Naive thymus-derived CD4-positive, alpha-beta T cell (primary cell): ENCODE measurements at regions of chr6 and their contacts with region 1.

Region 1: DNA sequence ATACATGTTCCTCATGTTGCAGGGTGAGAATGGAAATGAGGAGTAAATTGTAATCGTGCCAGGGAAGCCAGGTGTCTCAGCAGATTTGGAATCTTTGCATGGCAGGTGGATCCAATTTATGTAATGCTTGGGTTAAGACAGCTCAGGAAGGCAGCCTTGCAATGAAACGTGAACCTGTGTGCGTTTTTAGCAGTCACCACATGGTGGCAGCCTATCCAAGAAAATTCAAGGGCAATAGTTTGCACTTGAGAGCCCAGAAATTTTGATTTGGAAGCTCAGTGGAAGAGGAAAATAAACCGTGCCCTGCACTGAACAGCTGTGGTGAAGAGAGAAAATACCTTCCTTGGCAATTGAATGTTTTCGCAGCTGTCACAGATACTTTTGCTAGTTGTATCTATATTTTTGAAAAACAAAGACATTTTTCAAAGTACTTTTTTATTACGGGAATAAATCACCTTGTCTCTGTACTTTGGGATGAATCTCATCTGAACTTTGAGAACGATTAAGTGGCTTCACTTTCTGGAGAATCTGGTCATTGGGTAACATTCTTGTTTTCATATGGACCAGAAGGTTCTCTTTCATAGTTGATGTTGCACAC is 26.5 kb downstream of the MTHFD1L start:
- DNase-seq: peak; percentile 8 to 58 (median 44)
- ATAC-seq: peak; percentile 76
- H3K4me3 ChIP-seq: no peak overlapping the region
- H3K4me3 Mint-ChIP-seq: no peak overlapping the region
- H3K27ac ChIP-seq: no peak overlapping the region
- H3K27ac Mint-ChIP-seq: peak overlapping the region in 1 of 9 donors; percentile 34
- H3K4me1 ChIP-seq: peaks cover 0 to 9% of the 10 kb centered on the region in 2 donors
- H3K4me1 Mint-ChIP-seq: peaks cover 4 to 30% (median 14%) of the 10 kb centered on the region in 7 donors
- H3K27me3 ChIP-seq: no peaks in the 10 kb centered on the region
- H3K27me3 Mint-ChIP-seq: no peaks in the 10 kb centered on the region

Region 2: DNA sequence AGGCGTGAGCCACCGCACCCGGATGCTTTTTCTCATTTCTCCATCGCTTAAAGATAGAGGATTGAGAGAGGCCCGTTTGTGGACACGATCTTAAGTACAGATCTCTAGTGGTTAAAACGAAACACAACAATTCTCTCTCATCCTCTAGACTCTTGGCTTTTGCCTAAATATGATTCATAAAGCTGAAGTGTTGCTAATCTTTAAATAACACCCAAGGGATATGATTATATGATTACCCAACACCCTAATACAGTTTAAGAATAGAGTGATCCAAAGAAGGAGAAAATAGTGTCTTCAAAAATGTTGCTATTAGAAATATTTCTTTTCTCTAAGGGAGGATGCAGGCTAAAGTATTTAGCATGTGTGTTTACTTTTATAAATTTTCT is 23.9 kb after region 1 on chr6:
- CTCF ChIA-PET with region 1: no interaction called
- POLR2A ChIA-PET with region 1: no interaction called
- intact Hi-C with region 1: no loop called
- DNase-seq: no peak
- ATAC-seq: no peak
- H3K4me3 ChIP-seq: no peak overlapping the region
- H3K4me3 Mint-ChIP-seq: no peak overlapping the region
- H3K27ac ChIP-seq: no peak overlapping the region
- H3K27ac Mint-ChIP-seq: no peak overlapping the region
- H3K4me1 ChIP-seq: no peaks in the 10 kb centered on the region
- H3K4me1 Mint-ChIP-seq: no peaks in the 10 kb centered on the region
- H3K27me3 ChIP-seq: no peaks in the 10 kb centered on the region
- H3K27me3 Mint-ChIP-seq: no peaks in the 10 kb centered on the region

Region 3: GRCh38 chr6:150987371-150987828 is 95.4 kb after region 1 on chr6:
- CTCF ChIA-PET with region 1: no interaction called
- POLR2A ChIA-PET with region 1: no interaction called
- intact Hi-C with region 1: no loop called
- DNase-seq: peak in 4 of 9 donors; percentile 2 to 52 (median 6)
- ATAC-seq: peak; percentile 71
- H3K4me3 ChIP-seq: no peak overlapping the region
- H3K4me3 Mint-ChIP-seq: peak overlapping the region in 3 of 10 donors; percentile 39 to 80 (median 64)
- H3K27ac ChIP-seq: no peak overlapping the region
- H3K27ac Mint-ChIP-seq: peak overlapping the region in 3 of 9 donors; percentile 28 to 99 (median 48)
- H3K4me1 ChIP-seq: no peaks in the 10 kb centered on the region
- H3K4me1 Mint-ChIP-seq: peaks cover 0 to 20% (median 0%) of the 10 kb centered on the region in 7 donors
- H3K27me3 ChIP-seq: no peaks in the 10 kb centered on the region
- H3K27me3 Mint-ChIP-seq: no peaks in the 10 kb centered on the region

Region 4: GRCh38 chr6:151014404-151015100 is 122.6 kb after region 1 on chr6:
- CTCF ChIA-PET with region 1: no interaction called
- POLR2A ChIA-PET with region 1: no interaction called
- intact Hi-C with region 1: loop called (anchors 1 to 2 kb)
- DNase-seq: peak; percentile 17 to 61 (median 47)
- ATAC-seq: peak; percentile 83
- H3K4me3 ChIP-seq: no peak overlapping the region
- H3K4me3 Mint-ChIP-seq: peak overlapping the region in 1 of 10 donors; percentile 22
- H3K27ac ChIP-seq: no peak overlapping the region
- H3K27ac Mint-ChIP-seq: peak overlapping the region in 1 of 9 donors; percentile 41
- H3K4me1 ChIP-seq: no peaks in the 10 kb centered on the region
- H3K4me1 Mint-ChIP-seq: peaks cover 0 to 10% (median 0%) of the 10 kb centered on the region in 7 donors
- H3K27me3 ChIP-seq: no peaks in the 10 kb centered on the region
- H3K27me3 Mint-ChIP-seq: no peaks in the 10 kb centered on the region

Region 5: DNA sequence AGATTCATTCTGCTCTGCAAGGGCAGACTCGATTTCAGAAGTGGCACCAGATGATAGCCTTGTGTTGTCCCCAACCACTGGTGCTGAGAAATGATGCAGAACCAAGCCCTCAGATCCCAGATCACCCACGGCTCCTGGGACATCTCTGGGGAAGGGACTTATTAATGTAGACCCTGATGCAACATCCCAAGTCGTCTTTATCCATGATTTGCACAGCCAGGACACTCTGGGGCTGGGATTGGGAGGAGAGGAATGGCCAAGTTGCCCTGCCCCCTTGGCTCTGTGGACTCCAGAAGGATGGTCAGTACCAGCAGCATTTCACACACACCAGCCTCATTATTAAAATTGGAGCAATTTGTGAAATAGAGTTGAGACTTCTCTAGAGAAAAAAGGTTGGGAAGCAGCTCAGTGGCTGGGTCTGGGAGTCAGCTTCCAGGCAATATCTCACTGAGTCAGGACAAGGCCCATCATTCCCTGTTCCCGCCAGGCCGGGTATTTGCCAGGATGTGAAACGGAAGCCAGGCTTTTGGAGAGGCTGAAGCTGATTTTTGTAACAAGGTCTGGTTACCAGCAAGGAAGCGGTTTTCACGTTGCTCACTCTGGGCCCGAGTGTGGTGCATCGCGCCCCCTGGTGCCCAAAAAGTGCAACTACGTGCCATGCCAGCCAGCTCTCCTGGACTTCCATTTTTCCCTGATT is 432.0 kb after region 1 on chr6:
- CTCF ChIA-PET with region 1: interaction called, 96 read pairs
- POLR2A ChIA-PET with region 1: interaction called, 3 read pairs
- intact Hi-C with region 1: loop called (anchors 1 kb)
- DNase-seq: peak; percentile 46 to 76 (median 65)
- ATAC-seq: peak; percentile 85
- H3K4me3 ChIP-seq: no peak overlapping the region
- H3K4me3 Mint-ChIP-seq: peak overlapping the region; percentile 22 to 87 (median 79)
- H3K27ac ChIP-seq: no peak overlapping the region
- H3K27ac Mint-ChIP-seq: peak overlapping the region in 1 of 9 donors; percentile 7
- H3K4me1 ChIP-seq: peaks cover 11 to 12% of the 10 kb centered on the region in 2 donors
- H3K4me1 Mint-ChIP-seq: peaks cover 9 to 27% (median 23%) of the 10 kb centered on the region in 7 donors
- H3K27me3 ChIP-seq: peaks cover 0 to 7% of the 10 kb centered on the region in 2 donors
- H3K27me3 Mint-ChIP-seq: peaks cover 27 to 62% (median 54%) of the 10 kb centered on the region in 5 donors

Region 6: GRCh38 chr6:151339369-151339768 is 447.4 kb after region 1 on chr6:
- CTCF ChIA-PET with region 1: interaction called, 6 read pairs
- POLR2A ChIA-PET with region 1: no interaction called
- intact Hi-C with region 1: loop called (anchors 1 kb)
- DNase-seq: no peak
- ATAC-seq: no peak
- H3K4me3 ChIP-seq: no peak overlapping the region
- H3K4me3 Mint-ChIP-seq: no peak overlapping the region
- H3K27ac ChIP-seq: no peak overlapping the region
- H3K27ac Mint-ChIP-seq: no peak overlapping the region
- H3K4me1 ChIP-seq: no peaks in the 10 kb centered on the region
- H3K4me1 Mint-ChIP-seq: peaks cover 0 to 5% (median 4%) of the 10 kb centered on the region in 7 donors
- H3K27me3 ChIP-seq: no peaks in the 10 kb centered on the region
- H3K27me3 Mint-ChIP-seq: peaks cover 0 to 3% (median 0%) of the 10 kb centered on the region in 5 donors

Region 7: GRCh38 chr6:151475653-151476523 is 583.9 kb after region 1 on chr6:
- CTCF ChIA-PET with region 1: no interaction called
- POLR2A ChIA-PET with region 1: no interaction called
- intact Hi-C with region 1: loop called in 1 of 2 experiments (anchors 1 kb)
- DNase-seq: peak in 7 of 9 donors; percentile 15 to 58 (median 47)
- ATAC-seq: peak; percentile 67
- H3K4me3 ChIP-seq: no peak overlapping the region
- H3K4me3 Mint-ChIP-seq: peak overlapping the region in 5 of 10 donors; percentile 14 to 54 (median 33)
- H3K27ac ChIP-seq: no peak overlapping the region
- H3K27ac Mint-ChIP-seq: peak overlapping the region in 2 of 9 donors; percentile 29 to 32
- H3K4me1 ChIP-seq: peaks cover 0 to 4% of the 10 kb centered on the region in 2 donors
- H3K4me1 Mint-ChIP-seq: peaks cover 0 to 9% (median 5%) of the 10 kb centered on the region in 7 donors
- H3K27me3 ChIP-seq: no peaks in the 10 kb centered on the region
- H3K27me3 Mint-ChIP-seq: no peaks in the 10 kb centered on the region

Region 8: GRCh38 chr6:152356451-152357061 is 1464.6 kb after region 1 on chr6:
- CTCF ChIA-PET with region 1: no interaction called
- POLR2A ChIA-PET with region 1: no interaction called
- intact Hi-C with region 1: loop called in 1 of 2 experiments (anchors 5 kb)
- DNase-seq: peak in 6 of 9 donors; percentile 24 to 46 (median 32)
- ATAC-seq: peak; percentile 63
- H3K4me3 ChIP-seq: no peak overlapping the region
- H3K4me3 Mint-ChIP-seq: no peak overlapping the region
- H3K27ac ChIP-seq: no peak overlapping the region
- H3K27ac Mint-ChIP-seq: no peak overlapping the region
- H3K4me1 ChIP-seq: no peaks in the 10 kb centered on the region
- H3K4me1 Mint-ChIP-seq: no peaks in the 10 kb centered on the region
- H3K27me3 ChIP-seq: no peaks in the 10 kb centered on the region
- H3K27me3 Mint-ChIP-seq: peaks cover 0 to 11% (median 0%) of the 10 kb centered on the region in 5 donors